Right ventricle myocardium inferior (tissue), 1 donor: ENCODE measurements at regions of chr12 and their contacts with region 1.

Region 1: GRCh38 chr12:19964549-19964948 is 403.8 kb upstream of the PDE3A start:
- DNase-seq: no peak
- ATAC-seq: no peak

Region 2: GRCh38 chr12:19994970-19995369 is 30.4 kb after region 1 on chr12:
- intact Hi-C with region 1: loop called (anchors 5 kb)
- DNase-seq: no peak
- ATAC-seq: no peak